PC-9 (cell line): ENCODE measurements at regions of chr4 and their contacts with region 1.

Region 1: GRCh38 chr4:158671915-158672806 is at the start of gene ETFDH:
- DNase-seq: peak; percentile 95 to 98
- H3K4me3 ChIP-seq: peak within 1 kb of the TSS; percentile 83
- H3K27ac ChIP-seq: peak within 1 kb of the TSS; percentile 74
- H3K4me1 ChIP-seq: peaks cover 8% of the 10 kb centered on the region
- H3K27me3 ChIP-seq: no peaks in the 10 kb centered on the region
- CTCF ChIP-seq: peak; percentile 63
- total RNA-seq, gene ETFDH: 16.9 and 21.0 TPM in 2 replicates

Region 2: GRCh38 chr4:158722917-158723793 is 51.0 kb after region 1 on chr4 and contains the start of gene PPID:
- CTCF ChIA-PET with region 1: no interaction called
- POLR2A ChIA-PET with region 1: no interaction called
- intact Hi-C with region 1: loop called (anchors 1 kb)
- DNase-seq: peak; percentile 71 to 83
- H3K4me3 ChIP-seq: peak within 1 kb of the TSS; percentile 65
- H3K27ac ChIP-seq: peak within 1 kb of the TSS; percentile 83
- H3K4me1 ChIP-seq: no peaks in the 10 kb centered on the region; the same call in 1 of the 2 replicates
- H3K27me3 ChIP-seq: no peaks in the 10 kb centered on the region
- CTCF ChIP-seq: no peak
- total RNA-seq, gene PPID: 21.4 and 28.2 TPM in 2 replicates

Region 3: GRCh38 chr4:160570271-160570670 is 1898.1 kb after region 1 on chr4:
- CTCF ChIA-PET with region 1: no interaction called
- POLR2A ChIA-PET with region 1: interaction called, 14 read pairs
- intact Hi-C with region 1: no loop called
- DNase-seq: no peak
- H3K4me3 ChIP-seq: no peak overlapping the region
- H3K27ac ChIP-seq: no peak overlapping the region
- H3K4me1 ChIP-seq: no peaks in the 10 kb centered on the region
- H3K27me3 ChIP-seq: no peaks in the 10 kb centered on the region
- CTCF ChIP-seq: no peak